Sciatic nerve (tissue), 2 donors: ENCODE measurements at regions of chr3 and their contacts with region 1.

Region 1: GRCh38 chr3:72794079-72794478 is 54.2 kb downstream of the SHQ1 start:
- DNase-seq: no peak
- ATAC-seq: no peak

Region 2: DNA sequence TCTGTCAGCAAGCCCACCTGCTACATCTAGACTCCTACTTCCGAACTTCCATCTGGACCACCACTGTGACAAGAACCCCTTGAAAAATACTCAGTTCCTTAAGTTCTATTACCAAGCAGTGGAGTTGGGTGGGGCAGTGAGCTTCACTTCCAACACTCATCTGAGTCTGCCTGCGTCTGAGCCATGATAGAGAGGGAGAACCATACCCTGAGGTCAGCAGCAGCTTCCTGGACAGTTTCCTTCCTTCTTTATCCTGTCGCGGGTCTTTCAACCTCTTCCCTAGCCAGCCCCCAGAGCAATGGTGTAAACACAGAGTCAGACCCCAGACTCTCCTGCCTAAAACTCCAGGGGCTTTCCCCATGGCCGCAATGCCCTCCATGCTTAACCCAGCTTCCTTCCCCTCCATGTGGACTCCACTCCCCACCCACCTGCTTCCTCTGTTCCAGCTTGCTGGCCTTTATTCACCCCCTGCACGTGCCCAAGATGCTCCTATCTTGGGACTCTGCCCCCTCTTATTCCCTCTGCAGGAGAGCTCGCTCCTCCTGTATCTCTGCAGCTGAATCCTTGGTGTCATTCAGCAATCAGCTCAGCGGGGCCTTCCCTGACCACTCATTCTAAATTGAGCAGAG is 157.0 kb before region 1 on chr3:
- intact Hi-C with region 1: no loop called
- DNase-seq: no peak
- ATAC-seq: no peak

Region 3: GRCh38 chr3:72768006-72768441 is 26.1 kb before region 1 on chr3:
- intact Hi-C with region 1: loop called (anchors 1 kb)
- DNase-seq: no peak
- ATAC-seq: no peak

Region 4: GRCh38 chr3:72872183-72872582 is 78.1 kb after region 1 on chr3:
- intact Hi-C with region 1: no loop called
- DNase-seq: no peak
- ATAC-seq: peak; percentile 91

Region 5: GRCh38 chr3:72907731-72908620 is 113.9 kb after region 1 on chr3:
- intact Hi-C with region 1: no loop called
- DNase-seq: no peak
- ATAC-seq: peak; percentile 92